Heart left ventricle (tissue), 16 donors: ENCODE measurements at regions of chr13 and their contacts with region 1.

Region 1: GRCh38 chr13:73754727-73755292 is 379.4 kb downstream of the KLF12 start:
- DNase-seq: peak in 1 of 5 donors; percentile 34
- ATAC-seq: peak in 3 of 4 donors; percentile 64 to 67 (median 65)
- H3K4me3 ChIP-seq: no peak overlapping the region
- H3K27ac ChIP-seq: no peak overlapping the region
- H3K4me1 ChIP-seq: peaks cover 0 to 8% (median 0%) of the 10 kb centered on the region in 12 donors
- H3K27me3 ChIP-seq: no peaks in the 10 kb centered on the region
- CTCF ChIP-seq: peak; percentile 56 to 83 (median 70)
- POLR2A ChIP-seq: no peak

Region 2: DNA sequence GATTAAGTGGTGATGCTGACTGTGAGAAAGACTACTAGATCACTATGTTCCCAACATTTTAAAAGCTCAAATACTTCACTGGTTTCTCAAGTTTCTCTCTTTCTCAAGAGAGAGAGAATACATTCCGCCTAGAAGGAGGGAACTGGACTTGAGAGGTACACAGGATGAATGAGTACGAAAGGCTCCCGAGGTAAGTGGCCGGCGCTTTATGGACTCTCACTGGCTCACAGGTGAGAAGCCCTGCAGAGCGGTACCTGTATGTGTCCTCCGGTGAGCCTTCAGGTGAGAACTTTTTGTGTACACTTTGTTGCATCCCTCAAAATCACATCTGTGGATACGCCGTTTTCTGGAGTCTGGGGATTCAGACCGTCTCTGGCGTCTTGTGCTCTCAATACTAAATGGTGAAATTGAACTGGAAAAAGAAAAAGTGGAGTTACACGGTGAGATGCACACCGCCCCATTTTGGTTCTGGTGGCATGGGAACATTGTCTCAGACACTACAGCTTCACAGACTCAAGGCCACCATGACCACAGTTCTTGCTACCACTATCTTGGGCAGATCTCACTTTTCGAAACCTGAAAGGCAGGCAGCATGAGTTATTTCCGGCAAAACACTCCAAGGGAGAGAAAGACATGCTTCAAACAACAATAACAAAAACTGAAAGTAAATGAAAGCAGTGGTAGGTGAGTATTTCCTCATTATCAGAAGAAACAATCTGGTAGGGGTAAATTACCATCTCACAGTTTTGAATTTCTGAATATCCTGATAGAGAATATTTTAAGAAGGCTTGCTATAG is 39.5 kb before region 1 on chr13:
- intact Hi-C with region 1: no loop called
- DNase-seq: no peak
- ATAC-seq: no peak
- H3K4me3 ChIP-seq: no peak overlapping the region
- H3K27ac ChIP-seq: peak overlapping the region in 1 of 12 donors; percentile 46
- H3K4me1 ChIP-seq: peaks cover 0 to 21% (median 11%) of the 10 kb centered on the region in 12 donors
- H3K27me3 ChIP-seq: no peaks in the 10 kb centered on the region
- CTCF ChIP-seq: no peak
- POLR2A ChIP-seq: no peak

Region 3: GRCh38 chr13:73820688-73821087 is 65.9 kb after region 1 on chr13:
- intact Hi-C with region 1: loop called in 2 of 10 experiments (anchors 5 to 10 kb)
- DNase-seq: no peak
- ATAC-seq: no peak
- H3K4me3 ChIP-seq: no peak overlapping the region
- H3K27ac ChIP-seq: no peak overlapping the region
- H3K4me1 ChIP-seq: peaks cover 0 to 7% (median 0%) of the 10 kb centered on the region in 12 donors
- H3K27me3 ChIP-seq: no peaks in the 10 kb centered on the region
- CTCF ChIP-seq: no peak
- POLR2A ChIP-seq: no peak

Region 4: GRCh38 chr13:73828811-73829210 is 74.0 kb after region 1 on chr13:
- intact Hi-C with region 1: loop called in 3 of 10 experiments (anchors 5 to 10 kb)
- DNase-seq: no peak
- ATAC-seq: no peak
- H3K4me3 ChIP-seq: no peak overlapping the region
- H3K27ac ChIP-seq: no peak overlapping the region
- H3K4me1 ChIP-seq: peaks cover 0 to 17% (median 2%) of the 10 kb centered on the region in 12 donors
- H3K27me3 ChIP-seq: no peaks in the 10 kb centered on the region
- CTCF ChIP-seq: no peak
- POLR2A ChIP-seq: no peak

Region 5: GRCh38 chr13:73835138-73835721 is 80.4 kb after region 1 on chr13:
- intact Hi-C with region 1: loop called in 1 of 10 experiments (anchors 10 kb)
- DNase-seq: no peak
- ATAC-seq: peak in 2 of 4 donors; percentile 48 to 69
- H3K4me3 ChIP-seq: no peak overlapping the region
- H3K27ac ChIP-seq: no peak overlapping the region
- H3K4me1 ChIP-seq: peaks cover 0 to 28% (median 4%) of the 10 kb centered on the region in 12 donors
- H3K27me3 ChIP-seq: no peaks in the 10 kb centered on the region
- CTCF ChIP-seq: peak; percentile 56 to 78 (median 70)
- POLR2A ChIP-seq: no peak

Region 6: DNA sequence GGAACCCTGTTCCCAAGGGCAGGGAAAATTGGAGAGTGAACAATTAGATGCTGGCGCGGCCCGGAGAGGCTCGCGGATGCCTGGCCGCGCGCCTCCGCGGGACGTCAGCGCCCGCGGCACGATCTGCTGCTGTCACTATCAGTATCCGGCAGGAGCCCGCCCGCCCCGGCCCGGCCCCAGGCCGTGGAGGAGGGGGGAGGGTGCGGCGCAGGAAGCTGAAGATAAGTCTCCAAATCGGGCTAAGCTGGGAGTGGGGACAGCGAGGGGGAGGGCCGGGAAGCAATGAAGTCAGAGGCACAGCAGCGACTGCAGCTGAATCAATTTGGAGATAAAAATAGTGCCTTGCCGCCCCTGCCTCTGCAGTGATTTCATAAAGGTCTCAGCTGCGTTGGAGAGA is 820.9 kb after region 1 on chr13:
- intact Hi-C with region 1: loop called in 1 of 10 experiments (anchors 10 kb)
- DNase-seq: peak; percentile 90 to 94 (median 92)
- ATAC-seq: peak; percentile 96 to 99 (median 99)
- H3K4me3 ChIP-seq: peak overlapping the region in 11 of 12 donors; percentile 31 to 51 (median 45)
- H3K27ac ChIP-seq: peak overlapping the region in 9 of 12 donors; percentile 6 to 86 (median 73)
- H3K4me1 ChIP-seq: peaks cover 4 to 29% (median 17%) of the 10 kb centered on the region in 12 donors
- H3K27me3 ChIP-seq: no peaks in the 10 kb centered on the region
- CTCF ChIP-seq: no peak
- POLR2A ChIP-seq: peak in 1 of 2 donors; percentile 7